ENCODE measurements at regions of chr9 and their contacts with region 1.

Region 1: DNA sequence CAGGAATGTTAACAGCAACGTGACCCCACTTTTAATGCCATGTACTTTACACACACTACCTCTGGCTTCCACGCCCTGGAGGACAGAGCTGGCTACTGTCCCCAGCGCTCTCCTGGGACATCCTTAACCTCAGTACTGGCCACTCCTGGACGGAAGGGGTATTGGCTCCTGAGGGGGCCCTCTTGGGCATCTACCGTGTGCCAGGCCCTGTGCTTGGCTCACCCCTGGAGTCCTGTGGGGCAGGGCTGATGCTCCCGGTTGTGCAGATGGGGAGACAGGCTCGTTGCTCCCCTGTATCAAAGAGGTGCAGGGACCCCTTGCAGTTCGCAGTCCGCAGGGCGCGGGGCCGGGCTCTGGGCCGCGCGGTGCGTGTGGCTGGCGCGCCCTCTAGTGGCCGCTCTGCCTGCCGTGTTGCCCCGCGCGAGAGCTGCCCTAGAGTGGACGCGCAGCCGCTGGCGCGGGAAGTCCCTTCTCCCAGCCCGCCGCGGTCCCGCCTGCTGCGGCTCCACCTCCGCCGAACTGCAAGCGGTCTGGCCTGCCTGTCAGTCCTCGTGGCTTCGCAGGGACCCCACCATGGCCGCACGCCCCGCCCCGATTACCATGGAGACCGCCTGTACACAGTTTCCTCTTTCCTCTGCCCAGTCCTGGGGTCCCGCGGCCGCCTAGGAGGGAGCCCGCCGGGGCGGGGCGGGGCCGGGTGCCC is at the start of gene WDR38:
- DNase-seq: peak; percentile 79 to 90 (median 86)
- ATAC-seq: peak; percentile 89 to 92 (median 91)
- H3K4me3 ChIP-seq: peak within 1 kb of the TSS in 11 of 12 donors; percentile 17 to 60 (median 49)
- H3K27ac ChIP-seq: peak within 1 kb of the TSS; percentile 42 to 95 (median 86)
- H3K4me1 ChIP-seq: peaks cover 0 to 41% (median 20%) of the 10 kb centered on the region in 12 donors
- H3K27me3 ChIP-seq: no peaks in the 10 kb centered on the region
- CTCF ChIP-seq: peak; percentile 96 to 100 (median 98)
- POLR2A ChIP-seq: peak in 1 of 2 donors; percentile 23
- total RNA-seq, gene WDR38: not detected

Region 2: GRCh38 chr9:124834591-124834990 is 18.4 kb before region 1 on chr9:
- intact Hi-C with region 1: loop called in 2 of 10 experiments (anchors 1 to 2 kb)
- DNase-seq: peak in 2 of 5 donors; percentile 48 to 70
- ATAC-seq: peak in 3 of 4 donors; percentile 2 to 26 (median 21)
- H3K4me3 ChIP-seq: peak overlapping the region in 1 of 12 donors; percentile 4
- H3K27ac ChIP-seq: peak overlapping the region; percentile 75 to 95 (median 88)
- H3K4me1 ChIP-seq: peaks cover 0 to 53% (median 41%) of the 10 kb centered on the region in 12 donors
- H3K27me3 ChIP-seq: no peaks in the 10 kb centered on the region
- CTCF ChIP-seq: no peak
- POLR2A ChIP-seq: no peak

Region 3: GRCh38 chr9:124839612-124840299 is 13.2 kb before region 1 on chr9:
- intact Hi-C with region 1: loop called in 1 of 10 experiments (anchors 2 kb)
- DNase-seq: peak in 1 of 5 donors; percentile 31
- ATAC-seq: peak in 1 of 4 donors; percentile 24
- H3K4me3 ChIP-seq: no peak overlapping the region
- H3K27ac ChIP-seq: peak overlapping the region in 7 of 12 donors; percentile 5 to 54 (median 45)
- H3K4me1 ChIP-seq: peaks cover 0 to 31% (median 13%) of the 10 kb centered on the region in 12 donors
- H3K27me3 ChIP-seq: no peaks in the 10 kb centered on the region
- CTCF ChIP-seq: peak; percentile 15 to 56 (median 40)
- POLR2A ChIP-seq: no peak

Measured in heart left ventricle (tissue), 16 donors.